ENCODE measurements at regions of chr2 and their contacts with region 1.

Region 1: DNA sequence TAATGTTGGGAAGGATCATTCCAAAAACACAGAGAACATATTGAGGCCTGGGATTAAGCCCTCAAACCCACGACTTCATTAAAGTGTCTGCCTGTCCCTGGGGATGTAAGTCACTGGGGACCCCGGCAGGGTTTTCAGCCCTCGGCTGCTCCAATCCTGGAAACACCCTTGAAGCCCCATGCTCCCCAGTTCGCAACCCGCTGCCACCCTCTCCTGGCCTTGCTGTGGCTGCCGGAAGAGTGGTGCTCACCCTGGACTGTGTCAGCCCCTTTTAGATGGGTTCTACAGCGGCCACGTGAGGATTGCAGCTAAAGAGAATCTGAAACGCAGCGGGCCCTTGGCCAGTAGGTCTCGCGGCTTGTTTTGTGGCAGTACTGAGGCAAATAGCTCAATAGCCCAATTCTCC is 80.0 kb downstream of the EPAS1 start:
- DNase-seq: no peak
- ATAC-seq: peak; percentile 24 to 48

Region 2: DNA sequence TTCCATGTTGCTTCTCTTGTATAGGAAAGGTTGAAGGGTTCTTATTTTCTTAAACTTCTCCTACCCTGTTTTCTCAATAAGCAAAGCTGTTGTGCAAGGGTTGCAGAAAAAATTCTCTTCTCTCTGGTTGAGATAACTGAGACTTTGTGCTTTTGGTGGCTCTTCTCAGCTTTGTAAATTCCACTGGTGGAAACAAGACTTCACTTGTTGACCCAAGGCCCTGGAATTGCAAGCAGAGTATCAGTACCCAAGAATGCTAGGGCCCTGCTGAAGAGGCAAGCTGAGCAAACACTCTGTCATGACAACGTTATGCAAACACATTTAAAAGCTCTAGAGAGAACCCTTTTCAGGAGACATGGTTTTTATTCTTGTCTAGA is 374.7 kb before region 1 on chr2:
- intact Hi-C with region 1: loop called in 1 of 2 experiments (anchors 10 kb)
- DNase-seq: no peak
- ATAC-seq: peak; percentile 49 to 88

Region 3: DNA sequence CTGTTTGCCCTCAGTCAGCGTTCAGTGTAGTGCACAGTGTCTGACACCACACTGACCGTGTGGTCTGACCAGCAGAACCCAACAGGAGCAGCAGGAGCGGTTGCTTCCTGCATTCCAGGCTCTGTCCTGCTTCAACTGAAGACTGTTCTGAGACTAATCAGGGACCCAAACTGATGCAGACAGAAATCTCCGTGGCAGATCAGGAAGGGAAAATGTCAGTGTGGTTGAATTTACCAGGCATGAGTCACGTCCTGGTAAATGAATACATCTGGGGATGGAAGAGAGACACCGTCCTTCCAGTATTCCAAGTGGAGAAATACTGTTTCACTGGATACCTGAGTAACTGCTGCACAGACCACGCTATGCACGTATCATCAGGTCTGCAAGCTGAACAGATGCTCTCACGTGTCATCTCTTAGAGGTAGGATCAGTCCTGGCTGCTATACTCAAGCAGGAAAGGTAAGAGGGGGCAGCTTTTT is 303.6 kb before region 1 on chr2:
- intact Hi-C with region 1: loop called in 1 of 2 experiments (anchors 5 kb)
- DNase-seq: no peak
- ATAC-seq: peak; percentile 27 to 61

Region 4: DNA sequence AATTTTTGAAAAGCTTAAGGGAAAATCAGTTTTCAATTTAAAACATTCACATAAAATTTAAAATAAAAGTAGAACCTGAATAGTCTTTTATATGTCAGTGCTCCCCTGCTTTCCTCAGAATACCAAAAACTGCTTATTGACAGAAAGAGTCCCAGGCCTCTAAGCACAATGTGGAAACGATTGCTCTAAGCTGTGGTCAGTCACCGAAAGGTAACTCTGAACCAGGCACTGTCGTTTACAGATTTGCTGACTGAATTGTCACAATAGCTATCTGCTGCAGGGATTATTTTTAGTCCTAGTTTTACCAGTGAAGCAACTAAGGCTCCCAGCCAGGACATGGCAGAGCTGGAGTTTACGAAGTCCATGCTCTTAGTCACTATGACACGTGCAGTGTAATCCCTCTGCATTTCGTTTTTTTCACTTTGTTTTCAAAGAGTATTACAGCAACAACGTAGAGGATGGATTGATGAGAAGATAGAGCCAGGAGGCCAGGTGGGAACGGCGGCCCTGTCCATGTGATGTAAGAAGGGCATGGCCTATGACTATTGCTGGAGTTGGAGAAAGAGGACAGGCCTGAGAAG is 74.0 kb after region 1 on chr2:
- intact Hi-C with region 1: loop called in 1 of 2 experiments (anchors 10 kb)
- DNase-seq: no peak
- ATAC-seq: peak; percentile 51 to 59